Activated CD4-positive, alpha-beta memory T cell treated with anti-CD3 and anti-CD28 coated beads for 36 hours (primary cell): ENCODE measurements at regions of chr13 and their contacts with region 1.

Region 1: GRCh38 chr13:32586080-32586900 is at the start of gene PDS5B:
- DNase-seq: peak; percentile 95
- H3K4me3 Mint-ChIP-seq: peak within 1 kb of the TSS; percentile 94
- H3K27ac Mint-ChIP-seq: peak within 1 kb of the TSS; percentile 95
- H3K4me1 Mint-ChIP-seq: peaks cover 36% of the 10 kb centered on the region
- H3K27me3 Mint-ChIP-seq: no peaks in the 10 kb centered on the region
- total RNA-seq, gene PDS5B: 59.4 to 61.7 TPM

Region 2: DNA sequence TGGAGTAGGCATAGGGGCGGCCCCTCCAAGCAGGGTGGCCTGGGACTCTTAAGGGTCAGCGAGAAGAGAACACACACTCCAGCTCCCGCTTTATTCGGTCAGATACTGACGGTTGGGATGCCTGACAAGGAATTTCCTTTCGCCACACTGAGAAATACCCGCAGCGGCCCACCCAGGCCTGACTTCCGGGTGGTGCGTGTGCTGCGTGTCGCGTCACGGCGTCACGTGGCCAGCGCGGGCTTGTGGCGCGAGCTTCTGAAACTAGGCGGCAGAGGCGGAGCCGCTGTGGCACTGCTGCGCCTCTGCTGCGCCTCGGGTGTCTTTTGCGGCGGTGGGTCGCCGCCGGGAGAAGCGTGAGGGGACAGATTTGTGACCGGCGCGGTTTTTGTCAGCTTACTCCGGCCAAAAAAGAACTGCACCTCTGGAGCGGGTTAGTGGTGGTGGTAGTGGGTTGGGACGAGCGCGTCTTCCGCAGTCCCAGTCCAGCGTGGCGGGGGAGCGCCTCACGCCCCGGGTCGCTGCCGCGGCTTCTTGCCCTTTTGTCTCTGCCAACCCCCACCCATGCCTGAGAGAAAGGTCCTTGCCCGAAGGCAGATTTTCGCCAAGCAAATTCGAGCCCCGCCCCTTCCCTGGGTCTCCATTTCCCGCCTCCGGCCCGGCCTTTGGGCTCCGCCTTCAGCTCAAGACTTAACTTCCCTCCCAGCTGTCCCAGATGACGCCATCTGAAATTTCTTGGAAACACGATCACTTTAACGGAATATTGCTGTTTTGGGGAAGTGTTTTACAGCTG is 270.9 kb before region 1 on chr13 and contains the starts of genes BRCA2 and ZAR1L:
- CTCF ChIA-PET with region 1: interaction called, 7 read pairs
- POLR2A ChIA-PET with region 1: interaction called, 6 read pairs
- intact Hi-C with region 1: loop called (anchors 1 kb)
- DNase-seq: peak; percentile 93
- H3K4me3 Mint-ChIP-seq: peak within 1 kb of the TSS; percentile 95
- H3K27ac Mint-ChIP-seq: peak within 1 kb of the TSS; percentile 99
- H3K4me1 Mint-ChIP-seq: peaks cover 13% of the 10 kb centered on the region
- H3K27me3 Mint-ChIP-seq: no peaks in the 10 kb centered on the region
- total RNA-seq, gene BRCA2: 22.1 to 23.1 TPM
- total RNA-seq, gene ZAR1L: not detected

Region 3: DNA sequence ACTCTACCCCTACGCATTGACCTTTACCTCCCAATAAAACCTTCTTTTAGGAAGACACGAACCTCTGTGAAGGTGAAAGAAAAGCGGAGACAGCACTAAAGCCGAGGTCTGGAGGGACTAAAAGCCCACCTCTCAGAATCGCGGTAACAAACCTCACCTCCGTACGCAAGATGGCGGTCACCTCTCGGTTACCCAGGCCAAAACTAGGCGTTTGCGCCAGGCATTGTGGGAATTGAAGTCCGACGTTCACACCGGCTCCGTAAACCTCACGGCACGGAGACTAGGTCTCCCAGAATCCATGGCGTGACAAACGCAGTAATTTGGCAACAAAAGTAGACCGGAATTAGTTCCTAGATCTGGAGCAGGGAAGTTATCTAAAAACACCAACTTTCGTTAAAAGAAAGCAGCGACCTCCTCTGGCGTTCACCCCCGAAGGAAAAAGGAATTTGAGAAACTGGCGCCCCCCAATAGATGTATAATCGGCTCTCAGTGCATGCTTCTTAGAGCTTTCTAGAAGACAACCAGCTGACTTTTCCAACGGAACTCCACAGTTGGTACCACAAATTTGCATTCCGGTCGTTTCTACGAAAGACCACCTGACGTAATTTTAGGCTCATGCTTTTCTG is 47.6 kb before region 1 on chr13 and contains the start of gene N4BP2L2:
- CTCF ChIA-PET with region 1: interaction called, 10 read pairs
- POLR2A ChIA-PET with region 1: interaction called, 7 read pairs
- intact Hi-C with region 1: loop called (anchors 1 kb)
- DNase-seq: peak; percentile 95
- H3K4me3 Mint-ChIP-seq: peak within 1 kb of the TSS; percentile 99
- H3K27ac Mint-ChIP-seq: peak within 1 kb of the TSS; percentile 100
- H3K4me1 Mint-ChIP-seq: peaks cover 41% of the 10 kb centered on the region
- H3K27me3 Mint-ChIP-seq: peaks cover 2% of the 10 kb centered on the region
- total RNA-seq, gene N4BP2L2: 86.6 to 102 TPM

Region 4: GRCh38 chr13:32650705-32651311 is 64.5 kb after region 1 on chr13:
- CTCF ChIA-PET with region 1: interaction called, 57 read pairs
- POLR2A ChIA-PET with region 1: interaction called, 9 read pairs
- intact Hi-C with region 1: loop called (anchors 1 kb)
- DNase-seq: peak; percentile 78
- H3K4me3 Mint-ChIP-seq: no peak overlapping the region
- H3K27ac Mint-ChIP-seq: no peak overlapping the region
- H3K4me1 Mint-ChIP-seq: peaks cover 46% of the 10 kb centered on the region
- H3K27me3 Mint-ChIP-seq: no peaks in the 10 kb centered on the region

Region 5: DNA sequence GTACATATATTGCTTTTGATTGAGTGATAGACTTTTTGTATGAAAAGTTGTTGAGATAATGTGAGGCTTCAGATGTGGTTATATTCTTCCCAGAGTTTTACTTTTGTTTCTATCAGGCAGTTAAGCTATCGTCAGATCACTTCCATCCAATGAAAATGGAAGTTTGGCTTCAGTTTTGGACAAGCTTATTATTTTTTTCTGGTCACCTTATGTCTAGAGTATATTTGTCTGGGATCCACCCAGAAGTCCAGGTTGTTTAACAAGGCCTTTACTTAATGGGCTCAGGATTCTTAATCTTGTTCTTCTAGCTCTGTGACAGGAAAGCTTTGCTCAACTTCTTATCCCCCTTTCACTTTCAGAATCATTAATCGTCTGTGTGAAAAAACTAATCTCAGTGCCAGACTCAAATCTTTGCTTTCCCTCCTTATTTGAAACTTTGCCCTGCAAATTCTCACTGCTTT is 150.9 kb after region 1 on chr13:
- CTCF ChIA-PET with region 1: interaction called, 4 read pairs
- POLR2A ChIA-PET with region 1: interaction called, 3 read pairs
- intact Hi-C with region 1: loop called (anchors 2 kb)
- DNase-seq: no peak
- H3K4me3 Mint-ChIP-seq: peak overlapping the region; percentile 72
- H3K27ac Mint-ChIP-seq: peak overlapping the region; percentile 83
- H3K4me1 Mint-ChIP-seq: peaks cover 35% of the 10 kb centered on the region
- H3K27me3 Mint-ChIP-seq: no peaks in the 10 kb centered on the region

Region 6: GRCh38 chr13:32905063-32905863 is 319.0 kb after region 1 on chr13:
- CTCF ChIA-PET with region 1: interaction called, 3 read pairs
- POLR2A ChIA-PET with region 1: no interaction called
- intact Hi-C with region 1: loop called (anchors 2 kb)
- DNase-seq: peak; percentile 40
- H3K4me3 Mint-ChIP-seq: peak overlapping the region; percentile 44
- H3K27ac Mint-ChIP-seq: peak overlapping the region; percentile 87
- H3K4me1 Mint-ChIP-seq: peaks cover 19% of the 10 kb centered on the region
- H3K27me3 Mint-ChIP-seq: peaks cover 33% of the 10 kb centered on the region

Region 7: DNA sequence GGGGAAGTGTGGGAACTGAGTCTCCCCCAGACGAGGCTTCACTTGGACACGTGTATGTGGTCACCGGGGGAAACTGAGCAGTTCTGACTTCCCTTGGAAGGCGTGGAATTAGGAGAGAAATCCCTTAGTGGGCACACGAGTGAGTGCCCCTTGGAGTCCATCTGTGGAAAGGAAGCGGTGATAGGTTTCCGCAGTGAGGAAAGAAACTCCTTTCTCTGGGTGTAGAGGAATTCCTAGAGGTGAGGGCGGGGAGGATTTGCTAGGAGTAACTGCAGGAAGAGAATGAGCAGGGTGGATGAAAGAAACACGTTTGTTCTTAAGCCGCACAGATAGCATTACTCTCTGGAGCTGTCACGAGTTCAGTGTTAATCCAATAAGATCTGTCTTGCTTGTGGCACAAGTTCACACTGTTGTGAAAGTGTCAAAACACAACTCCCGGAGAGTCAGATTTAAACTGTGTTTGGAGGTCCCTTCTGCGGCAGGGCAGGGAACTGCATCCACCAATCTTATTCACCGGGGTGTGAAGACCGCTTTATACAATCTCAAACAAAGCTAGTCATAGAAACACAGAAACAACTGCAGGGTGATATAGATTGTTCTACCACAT is 431.1 kb after region 1 on chr13:
- CTCF ChIA-PET with region 1: interaction called, 5 read pairs
- POLR2A ChIA-PET with region 1: no interaction called
- intact Hi-C with region 1: loop called (anchors 1 kb)
- DNase-seq: peak; percentile 76
- H3K4me3 Mint-ChIP-seq: peak overlapping the region; percentile 65
- H3K27ac Mint-ChIP-seq: no peak overlapping the region
- H3K4me1 Mint-ChIP-seq: peaks cover 11% of the 10 kb centered on the region
- H3K27me3 Mint-ChIP-seq: peaks cover 57% of the 10 kb centered on the region

Region 8: GRCh38 chr13:33132644-33133440 is 546.6 kb after region 1 on chr13:
- CTCF ChIA-PET with region 1: no interaction called
- POLR2A ChIA-PET with region 1: no interaction called
- intact Hi-C with region 1: no loop called
- DNase-seq: no peak
- H3K4me3 Mint-ChIP-seq: no peak overlapping the region
- H3K27ac Mint-ChIP-seq: no peak overlapping the region
- H3K4me1 Mint-ChIP-seq: peaks cover 2% of the 10 kb centered on the region
- H3K27me3 Mint-ChIP-seq: no peaks in the 10 kb centered on the region